ENCODE measurements at regions of chr1 and their contacts with region 1.

Region 1: DNA sequence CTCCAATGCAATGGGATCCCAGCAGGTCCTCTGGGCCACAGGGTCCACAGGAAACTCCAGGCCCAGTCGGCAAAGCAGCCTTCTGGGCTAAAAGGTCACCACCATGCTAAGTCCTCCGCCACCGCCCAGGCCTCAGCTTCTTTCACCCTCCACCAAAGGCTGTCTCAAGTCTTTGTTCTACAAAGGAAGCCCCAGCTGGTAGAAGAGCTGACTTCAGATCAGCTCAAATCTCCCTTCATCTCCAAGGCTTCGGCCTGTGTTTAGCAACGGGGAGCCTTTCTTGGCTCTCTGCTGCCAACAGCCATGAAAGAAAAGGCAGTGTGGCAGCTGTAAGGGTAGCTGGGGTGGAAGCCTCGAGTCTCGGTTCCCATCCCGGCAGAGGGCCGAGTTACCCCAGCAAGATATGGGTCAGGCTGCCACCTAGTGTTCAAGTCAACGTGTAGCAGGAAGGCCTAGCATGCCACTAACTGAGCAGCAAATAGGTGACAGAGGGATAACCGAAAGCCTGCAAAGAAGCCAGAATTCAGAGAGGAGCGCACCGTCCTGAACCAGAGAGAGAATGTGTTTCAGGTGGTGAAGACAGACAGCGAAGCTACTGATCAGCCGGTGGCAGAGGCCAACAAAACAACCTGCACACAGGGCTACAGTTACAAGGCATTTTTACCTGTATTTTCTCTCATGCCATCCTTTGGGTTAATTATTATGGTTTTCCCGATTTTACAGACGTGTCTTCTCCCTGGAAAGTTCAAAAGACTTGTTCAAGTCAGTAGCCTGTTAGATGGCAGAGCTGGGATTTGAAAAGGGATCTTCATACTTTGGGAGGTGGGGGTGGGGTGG is 26.8 kb upstream of the CRNN start:
- DNase-seq: peak; percentile 77
- ATAC-seq: peak; percentile 99
- H3K4me3 Mint-ChIP-seq: no peak overlapping the region
- H3K27ac Mint-ChIP-seq: no peak overlapping the region
- H3K4me1 Mint-ChIP-seq: no peaks in the 10 kb centered on the region
- H3K27me3 Mint-ChIP-seq: peaks cover 25% of the 10 kb centered on the region

Region 2: DNA sequence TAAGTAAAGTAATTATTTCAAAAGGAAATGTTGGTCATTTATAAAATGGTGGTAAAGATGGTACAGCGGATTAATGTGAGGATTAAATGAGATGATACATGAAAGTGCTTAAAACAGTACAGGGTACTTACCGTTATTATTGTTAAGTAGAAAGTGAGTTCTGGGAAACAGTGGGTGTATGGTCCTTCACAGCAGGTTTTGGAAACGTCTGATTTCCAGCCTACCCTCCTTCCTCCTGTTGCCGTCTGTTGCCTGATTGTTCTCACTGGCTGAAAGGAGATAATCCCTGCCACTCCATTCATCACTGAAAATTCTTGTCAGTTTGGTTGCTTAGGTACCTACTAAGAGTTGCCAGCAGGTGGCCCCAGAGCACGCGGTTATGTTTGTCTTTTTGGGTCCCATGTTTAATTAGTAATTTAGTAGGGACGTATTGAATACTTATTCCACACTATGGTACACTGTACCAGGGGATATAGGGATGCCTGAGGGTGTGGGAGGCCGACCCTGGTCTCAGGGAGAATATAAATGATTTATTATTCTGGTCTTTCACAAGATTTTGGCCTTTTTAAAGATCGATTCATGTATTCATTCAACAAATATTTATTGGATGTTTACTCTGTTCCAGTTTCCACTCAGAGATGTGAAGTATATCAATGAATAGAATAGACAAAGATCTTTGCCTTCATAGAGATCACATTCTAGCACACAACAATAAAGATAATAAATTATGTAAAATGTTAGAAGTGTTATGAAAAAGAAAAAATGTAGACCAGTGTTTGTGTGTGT is 251.0 kb before region 1 on chr1:
- CTCF ChIA-PET with region 1: interaction called, 25 read pairs
- POLR2A ChIA-PET with region 1: no interaction called
- DNase-seq: peak; percentile 77
- ATAC-seq: peak; percentile 57
- H3K4me3 Mint-ChIP-seq: peak overlapping the region; percentile 66
- H3K27ac Mint-ChIP-seq: no peak overlapping the region
- H3K4me1 Mint-ChIP-seq: peaks cover 6% of the 10 kb centered on the region
- H3K27me3 Mint-ChIP-seq: peaks cover 12% of the 10 kb centered on the region

Region 3: DNA sequence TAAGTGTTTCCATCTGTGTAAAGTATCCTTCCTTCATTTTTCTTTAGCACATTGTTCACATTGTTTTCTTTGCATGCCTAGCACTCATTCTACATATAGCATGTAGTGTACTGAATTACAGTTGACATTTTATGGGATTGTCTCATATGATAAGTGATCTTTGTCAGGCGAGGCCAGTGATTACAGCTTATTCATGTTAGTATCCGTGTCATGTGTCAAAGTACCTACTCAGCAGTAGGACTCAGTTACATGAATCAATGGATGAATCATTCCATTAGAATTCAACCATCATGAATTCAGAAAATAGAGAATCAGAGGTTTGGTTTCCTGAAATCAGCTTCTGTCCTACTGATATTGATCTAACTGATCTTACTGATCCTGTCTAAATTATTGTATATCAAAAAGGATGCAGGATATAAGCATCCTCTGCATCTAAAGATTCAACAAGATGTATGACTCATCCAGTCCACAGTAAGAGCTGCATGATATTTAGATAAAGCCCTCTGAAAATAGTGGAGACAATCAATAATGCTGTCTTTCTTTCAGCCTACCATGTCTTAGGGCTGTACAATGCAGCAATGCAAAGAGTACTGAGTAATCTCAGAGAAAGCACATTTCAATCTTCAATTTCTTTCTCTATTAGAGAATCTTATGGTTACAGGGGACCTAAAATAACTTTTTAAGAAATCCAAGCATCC is 196.1 kb before region 1 on chr1:
- CTCF ChIA-PET with region 1: no interaction called
- POLR2A ChIA-PET with region 1: no interaction called
- DNase-seq: no peak
- ATAC-seq: no peak
- H3K4me3 Mint-ChIP-seq: no peak overlapping the region
- H3K27ac Mint-ChIP-seq: no peak overlapping the region
- H3K4me1 Mint-ChIP-seq: no peaks in the 10 kb centered on the region
- H3K27me3 Mint-ChIP-seq: peaks cover 12% of the 10 kb centered on the region

Region 4: DNA sequence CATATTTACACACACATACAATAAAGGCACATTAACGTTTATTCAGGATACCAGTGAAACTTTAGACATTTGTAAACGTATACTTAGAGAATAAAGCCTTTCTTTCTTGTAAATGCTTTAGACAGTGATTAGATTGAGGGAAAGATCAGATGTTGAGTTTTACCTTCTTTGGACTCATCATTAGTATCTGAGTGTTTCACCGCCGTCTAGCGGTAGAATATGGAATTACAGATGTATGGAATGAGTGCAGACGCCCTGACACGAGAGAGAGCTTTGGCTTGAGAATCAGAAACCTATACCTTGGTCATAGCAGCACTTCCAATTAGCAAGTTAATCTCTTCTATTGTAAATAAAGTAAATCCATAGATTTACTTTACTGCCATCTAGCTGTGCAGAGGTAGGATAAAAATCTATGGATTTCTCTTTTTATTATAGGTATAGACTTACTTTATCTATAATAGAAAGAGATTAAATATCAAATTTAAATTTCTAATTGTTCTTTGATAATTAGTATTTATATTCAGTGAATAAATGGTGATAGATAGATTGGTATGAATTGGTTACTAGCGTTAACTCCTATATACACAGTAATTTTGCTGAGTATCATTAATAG is 93.6 kb before region 1 on chr1:
- CTCF ChIA-PET with region 1: interaction called, 19 read pairs
- POLR2A ChIA-PET with region 1: no interaction called
- DNase-seq: peak; percentile 69
- ATAC-seq: peak; percentile 60
- H3K4me3 Mint-ChIP-seq: no peak overlapping the region
- H3K27ac Mint-ChIP-seq: no peak overlapping the region
- H3K4me1 Mint-ChIP-seq: no peaks in the 10 kb centered on the region
- H3K27me3 Mint-ChIP-seq: peaks cover 22% of the 10 kb centered on the region

Region 5: GRCh38 chr1:152398812-152399698 is 41.8 kb before region 1 on chr1:
- CTCF ChIA-PET with region 1: interaction called, 11 read pairs
- POLR2A ChIA-PET with region 1: no interaction called
- DNase-seq: peak; percentile 28
- ATAC-seq: no peak
- H3K4me3 Mint-ChIP-seq: no peak overlapping the region
- H3K27ac Mint-ChIP-seq: no peak overlapping the region
- H3K4me1 Mint-ChIP-seq: no peaks in the 10 kb centered on the region
- H3K27me3 Mint-ChIP-seq: peaks cover 11% of the 10 kb centered on the region

Region 6: GRCh38 chr1:152426731-152427130 is 14.1 kb before region 1 on chr1:
- CTCF ChIA-PET with region 1: interaction called, 10 read pairs
- POLR2A ChIA-PET with region 1: no interaction called
- DNase-seq: no peak
- ATAC-seq: no peak
- H3K4me3 Mint-ChIP-seq: no peak overlapping the region
- H3K27ac Mint-ChIP-seq: no peak overlapping the region
- H3K4me1 Mint-ChIP-seq: no peaks in the 10 kb centered on the region
- H3K27me3 Mint-ChIP-seq: peaks cover 2% of the 10 kb centered on the region

Region 7: DNA sequence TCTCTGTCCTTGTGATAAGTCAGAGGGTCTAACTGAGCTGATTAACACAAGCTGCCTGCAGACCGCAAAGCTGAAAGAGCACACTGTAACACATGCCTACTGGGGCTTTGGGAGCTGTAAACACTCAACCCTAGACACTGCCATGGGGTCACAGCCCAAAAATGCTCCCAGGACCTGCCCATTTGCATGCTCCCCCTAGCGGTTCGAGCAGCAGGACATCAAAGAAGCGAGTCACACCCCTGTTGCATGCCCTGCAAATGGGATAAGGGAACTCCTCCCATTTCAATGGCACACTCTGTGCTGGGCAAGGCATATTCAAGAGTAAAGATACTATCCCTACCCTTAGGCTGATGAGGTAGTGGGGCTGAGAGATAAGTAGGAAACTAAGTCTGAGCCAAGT is 103.0 kb after region 1 on chr1:
- CTCF ChIA-PET with region 1: no interaction called
- POLR2A ChIA-PET with region 1: no interaction called
- DNase-seq: no peak
- ATAC-seq: no peak
- H3K4me3 Mint-ChIP-seq: no peak overlapping the region
- H3K27ac Mint-ChIP-seq: no peak overlapping the region
- H3K4me1 Mint-ChIP-seq: no peaks in the 10 kb centered on the region
- H3K27me3 Mint-ChIP-seq: no peaks in the 10 kb centered on the region